Naive thymus-derived CD4-positive, alpha-beta T cell (primary cell): ENCODE measurements at regions of chr5 and their contacts with region 1.

Region 1: DNA sequence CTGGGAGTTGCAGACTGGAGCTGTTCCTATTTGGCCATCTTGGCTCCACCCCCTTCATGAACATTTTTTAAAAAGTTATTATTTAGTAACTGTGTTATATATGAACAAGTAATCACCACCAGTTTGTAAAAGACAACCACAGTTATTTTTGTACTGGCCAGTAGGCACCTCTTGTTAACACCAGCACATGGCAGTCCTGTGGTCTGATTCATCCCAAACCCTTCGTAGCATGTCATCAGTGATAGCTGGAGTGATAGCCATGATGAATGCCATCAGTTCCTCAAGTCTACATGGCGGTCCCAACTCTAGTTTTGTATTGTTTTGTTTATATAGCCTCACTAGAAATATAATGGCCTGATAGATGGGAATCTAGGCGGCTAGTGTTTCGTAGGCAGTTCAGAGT is 74.2 kb downstream of the CDC42SE2 start:
- DNase-seq: no peak
- ATAC-seq: no peak
- H3K4me3 ChIP-seq: no peak overlapping the region
- H3K4me3 Mint-ChIP-seq: peak overlapping the region in 7 of 10 donors; percentile 15 to 72 (median 37)
- H3K27ac ChIP-seq: no peak overlapping the region
- H3K27ac Mint-ChIP-seq: peak overlapping the region in 8 of 9 donors; percentile 8 to 58 (median 50)
- H3K4me1 ChIP-seq: peaks cover 2 to 40% of the 10 kb centered on the region in 2 donors
- H3K4me1 Mint-ChIP-seq: peaks cover 36 to 92% (median 73%) of the 10 kb centered on the region in 7 donors
- H3K27me3 ChIP-seq: no peaks in the 10 kb centered on the region
- H3K27me3 Mint-ChIP-seq: no peaks in the 10 kb centered on the region

Region 2: DNA sequence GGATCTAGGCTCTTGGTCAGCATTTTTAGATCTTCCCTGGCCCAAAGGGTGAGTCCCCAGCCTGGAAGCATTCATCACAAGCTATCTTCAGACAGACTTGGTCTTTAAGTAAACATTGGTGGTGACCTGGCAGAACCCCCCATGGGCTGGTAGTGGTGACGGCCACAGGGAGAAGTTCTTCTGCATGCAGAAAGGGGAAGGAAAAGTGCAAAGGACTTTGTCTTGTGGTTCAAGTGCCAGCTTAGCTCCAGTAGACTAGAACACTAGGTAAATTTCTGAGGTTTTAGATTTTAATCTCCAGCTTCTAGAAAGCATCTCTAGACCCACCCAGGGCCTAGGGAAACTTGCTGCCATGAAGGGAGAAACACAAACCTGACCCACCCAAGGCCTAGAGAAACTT is 849.8 kb before region 1 on chr5:
- CTCF ChIA-PET with region 1: no interaction called
- POLR2A ChIA-PET with region 1: no interaction called
- intact Hi-C with region 1: no loop called
- DNase-seq: no peak
- ATAC-seq: no peak
- H3K4me3 ChIP-seq: no peak overlapping the region
- H3K4me3 Mint-ChIP-seq: no peak overlapping the region
- H3K27ac ChIP-seq: no peak overlapping the region
- H3K27ac Mint-ChIP-seq: no peak overlapping the region
- H3K4me1 ChIP-seq: no peaks in the 10 kb centered on the region
- H3K4me1 Mint-ChIP-seq: no peaks in the 10 kb centered on the region
- H3K27me3 ChIP-seq: peaks cover 0 to 4% of the 10 kb centered on the region in 2 donors
- H3K27me3 Mint-ChIP-seq: peaks cover 0 to 15% (median 9%) of the 10 kb centered on the region in 5 donors

Region 3: GRCh38 chr5:131303537-131303936 is 34.5 kb before region 1 on chr5:
- CTCF ChIA-PET with region 1: no interaction called
- POLR2A ChIA-PET with region 1: interaction called, 3 read pairs
- intact Hi-C with region 1: loop called in 1 of 2 experiments (anchors 5 kb)
- DNase-seq: no peak
- ATAC-seq: no peak
- H3K4me3 ChIP-seq: no peak overlapping the region
- H3K4me3 Mint-ChIP-seq: peak overlapping the region in 5 of 10 donors; percentile 0 to 46 (median 28)
- H3K27ac ChIP-seq: peak overlapping the region; percentile 23
- H3K27ac Mint-ChIP-seq: peak overlapping the region in 6 of 9 donors; percentile 2 to 62 (median 36)
- H3K4me1 ChIP-seq: peaks cover 45 to 55% of the 10 kb centered on the region in 2 donors
- H3K4me1 Mint-ChIP-seq: peaks cover 53 to 77% (median 71%) of the 10 kb centered on the region in 7 donors
- H3K27me3 ChIP-seq: no peaks in the 10 kb centered on the region
- H3K27me3 Mint-ChIP-seq: no peaks in the 10 kb centered on the region

Region 4: GRCh38 chr5:131357739-131358561 is 19.9 kb after region 1 on chr5:
- CTCF ChIA-PET with region 1: interaction called, 3 read pairs
- POLR2A ChIA-PET with region 1: interaction called, 3 read pairs
- intact Hi-C with region 1: loop called in 1 of 2 experiments (anchors 2 kb)
- DNase-seq: peak in 6 of 9 donors; percentile 23 to 52 (median 40)
- ATAC-seq: peak; percentile 73
- H3K4me3 ChIP-seq: no peak overlapping the region
- H3K4me3 Mint-ChIP-seq: peak overlapping the region; percentile 14 to 75 (median 56)
- H3K27ac ChIP-seq: peak overlapping the region; percentile 58
- H3K27ac Mint-ChIP-seq: peak overlapping the region; percentile 82 to 93 (median 86)
- H3K4me1 ChIP-seq: peaks cover 37 to 41% of the 10 kb centered on the region in 2 donors
- H3K4me1 Mint-ChIP-seq: peaks cover 32 to 83% (median 75%) of the 10 kb centered on the region in 7 donors
- H3K27me3 ChIP-seq: no peaks in the 10 kb centered on the region
- H3K27me3 Mint-ChIP-seq: no peaks in the 10 kb centered on the region